Left lung (tissue), 14 donors: ENCODE measurements at regions of chr19 and their contacts with region 1.

Region 1: DNA sequence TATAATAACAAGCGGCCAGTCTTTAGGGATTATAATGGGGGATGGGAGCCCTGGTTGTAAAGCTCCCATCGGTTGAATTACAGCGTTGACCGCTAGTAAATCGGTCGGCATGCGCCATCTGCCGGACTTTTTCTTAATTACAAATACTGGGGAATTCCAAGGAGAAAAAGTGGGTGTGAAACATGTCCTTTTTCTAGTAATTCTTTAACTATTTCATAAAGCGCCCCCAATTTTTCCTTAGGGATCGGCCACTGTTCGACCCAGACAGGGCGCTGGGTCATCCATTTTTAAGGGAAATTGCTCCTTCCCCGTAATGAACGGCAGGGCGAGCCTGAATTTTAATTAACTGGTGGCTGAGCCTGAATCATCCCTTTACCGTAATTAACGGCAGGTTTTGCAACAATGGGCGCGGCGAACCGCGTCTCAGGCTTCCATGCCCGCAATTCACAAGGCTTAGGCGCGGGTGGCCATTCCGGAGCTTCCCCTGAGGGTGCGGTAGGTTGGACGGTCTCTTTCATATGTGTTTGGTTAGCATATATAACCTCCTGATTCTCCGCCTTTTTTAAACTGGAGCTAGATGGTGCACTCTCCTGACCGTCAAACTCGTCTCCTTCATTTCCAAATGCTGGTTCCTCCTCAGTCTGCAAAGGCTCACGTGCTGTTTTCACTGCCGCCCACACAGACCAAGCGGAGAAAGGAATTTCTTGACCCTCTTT is 30.2 kb upstream of the EVI5L start:
- DNase-seq: peak; percentile 51 to 85 (median 73)
- ATAC-seq: peak; percentile 98
- H3K4me3 ChIP-seq: peak overlapping the region in 1 of 2 donors; percentile 30
- H3K27ac ChIP-seq: peak overlapping the region in 1 of 2 donors; percentile 81
- H3K4me1 ChIP-seq: peaks cover 0 to 11% of the 10 kb centered on the region in 2 donors
- H3K27me3 ChIP-seq: peaks cover 0 to 13% of the 10 kb centered on the region in 2 donors
- CTCF ChIP-seq: peak; percentile 41 to 66

Region 2: DNA sequence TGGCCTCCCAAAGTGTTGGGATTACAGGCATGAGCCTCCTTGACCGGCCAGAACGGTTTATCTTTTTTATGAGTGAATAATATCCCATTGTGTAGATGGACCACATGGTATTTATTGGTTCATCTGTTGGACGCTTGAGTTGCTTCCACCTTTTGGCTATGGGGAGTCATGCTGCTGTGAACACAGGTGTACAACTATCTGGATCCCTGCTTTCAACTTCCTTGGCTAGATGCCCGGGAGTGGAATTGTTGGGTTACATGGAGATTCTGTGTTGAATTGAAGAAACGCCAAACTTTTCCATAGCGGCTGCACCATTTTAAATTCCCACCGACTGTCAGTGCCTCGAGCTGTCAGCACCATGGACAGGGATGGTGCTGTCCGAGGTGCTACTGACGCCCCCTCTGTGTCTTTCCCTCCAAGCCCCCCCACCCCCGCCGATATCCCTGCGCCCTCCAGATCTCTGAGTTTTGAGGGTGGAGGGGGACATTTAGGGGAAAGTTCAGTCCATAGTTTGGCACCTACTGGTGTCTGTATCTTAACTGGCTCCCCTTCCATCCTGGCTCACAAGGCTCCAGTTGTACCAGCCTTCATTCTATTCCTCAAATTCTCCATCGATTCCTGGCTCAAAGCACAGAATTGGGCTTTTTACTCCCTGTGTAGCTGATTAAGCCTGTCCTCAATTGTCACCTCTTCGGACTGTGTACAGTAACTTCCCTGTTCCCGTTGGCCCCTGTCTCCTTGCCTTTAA is 237.0 kb before region 1 on chr19:
- intact Hi-C with region 1: loop called in 1 of 2 experiments (anchors 10 kb)
- DNase-seq: no peak
- ATAC-seq: peak; percentile 35
- H3K4me3 ChIP-seq: no peak overlapping the region
- H3K27ac ChIP-seq: no peak overlapping the region
- H3K4me1 ChIP-seq: no peaks in the 10 kb centered on the region
- H3K27me3 ChIP-seq: no peaks in the 10 kb centered on the region
- CTCF ChIP-seq: no peak

Region 3: DNA sequence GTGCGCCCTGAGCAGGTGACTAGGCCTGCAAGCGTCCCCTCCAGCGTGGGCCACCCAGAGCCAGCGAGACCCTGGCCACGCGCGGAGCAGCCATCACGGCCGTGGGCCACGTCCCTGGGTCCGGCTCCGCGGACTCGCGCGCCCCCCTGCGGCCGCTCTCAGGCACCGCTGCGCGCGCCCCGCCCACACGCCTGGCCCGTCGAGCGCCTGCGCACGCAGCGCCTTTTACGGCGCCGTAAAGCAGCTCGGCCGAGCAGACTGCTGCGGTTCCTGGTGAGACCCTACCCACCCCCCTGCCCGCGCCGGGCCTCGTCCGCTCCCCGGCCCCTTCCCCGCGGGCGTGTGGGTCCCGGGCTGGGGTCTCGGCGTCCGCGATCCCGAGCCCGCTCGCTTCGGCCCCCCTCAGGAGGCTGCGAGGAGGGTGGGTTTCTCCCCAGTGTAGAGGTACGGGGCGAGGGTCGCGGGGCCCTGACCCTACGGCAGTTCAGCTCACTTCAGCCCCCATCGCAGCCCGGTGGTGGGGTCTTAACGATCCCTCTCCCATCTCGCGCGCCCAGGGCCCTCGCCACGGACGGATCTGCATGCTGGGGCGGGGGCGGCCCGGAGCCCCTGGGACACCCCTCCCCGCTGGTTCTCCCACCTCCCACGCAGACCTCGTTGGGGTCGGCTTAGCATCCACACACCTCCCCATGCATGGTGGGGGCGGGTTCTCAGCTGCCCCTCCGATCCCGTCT is 119.0 kb before region 1 on chr19 and contains the start of gene TRAPPC5:
- intact Hi-C with region 1: loop called in 1 of 2 experiments (anchors 10 kb)
- DNase-seq: peak; percentile 84 to 98 (median 91)
- ATAC-seq: peak; percentile 94
- H3K4me3 ChIP-seq: peak within 1 kb of the TSS; percentile 85 to 96
- H3K27ac ChIP-seq: peak within 1 kb of the TSS; percentile 65 to 98
- H3K4me1 ChIP-seq: peaks cover 0 to 31% of the 10 kb centered on the region in 2 donors
- H3K27me3 ChIP-seq: peaks cover 0 to 33% of the 10 kb centered on the region in 2 donors
- CTCF ChIP-seq: peak; percentile 97 to 100
- polyA plus RNA-seq, gene TRAPPC5: 25.7 to 51.5 (median 40.3) TPM

Region 4: DNA sequence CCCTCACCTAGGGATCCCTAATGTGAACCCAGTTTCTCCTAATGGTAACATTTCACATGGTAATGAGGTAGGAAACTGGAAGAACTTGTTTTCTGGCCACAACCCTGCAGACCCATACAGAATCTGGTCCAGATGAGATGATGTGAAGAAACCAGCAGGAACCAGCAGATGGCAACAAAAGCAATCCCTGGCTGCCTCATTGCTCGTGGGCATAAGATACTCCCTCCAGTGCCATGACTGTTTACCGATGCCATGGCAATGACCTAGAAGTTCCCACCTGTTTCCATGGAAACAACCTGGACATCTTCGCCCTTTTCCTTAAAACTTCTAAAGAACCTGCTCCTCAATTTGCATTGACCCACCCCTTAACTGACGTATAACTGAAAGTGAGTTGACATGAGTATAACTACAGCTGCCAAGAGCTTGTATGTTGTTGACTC is 51.0 kb before region 1 on chr19:
- intact Hi-C with region 1: no loop called
- DNase-seq: peak in 1 of 4 donors; percentile 16
- ATAC-seq: peak; percentile 60
- H3K4me3 ChIP-seq: no peak overlapping the region
- H3K27ac ChIP-seq: no peak overlapping the region
- H3K4me1 ChIP-seq: peaks cover 0 to 6% of the 10 kb centered on the region in 2 donors
- H3K27me3 ChIP-seq: peaks cover 0 to 9% of the 10 kb centered on the region in 2 donors
- CTCF ChIP-seq: no peak